Mammary epithelial cell (primary cell): ENCODE measurements at regions of chr7 and their contacts with region 1.

Region 1: DNA sequence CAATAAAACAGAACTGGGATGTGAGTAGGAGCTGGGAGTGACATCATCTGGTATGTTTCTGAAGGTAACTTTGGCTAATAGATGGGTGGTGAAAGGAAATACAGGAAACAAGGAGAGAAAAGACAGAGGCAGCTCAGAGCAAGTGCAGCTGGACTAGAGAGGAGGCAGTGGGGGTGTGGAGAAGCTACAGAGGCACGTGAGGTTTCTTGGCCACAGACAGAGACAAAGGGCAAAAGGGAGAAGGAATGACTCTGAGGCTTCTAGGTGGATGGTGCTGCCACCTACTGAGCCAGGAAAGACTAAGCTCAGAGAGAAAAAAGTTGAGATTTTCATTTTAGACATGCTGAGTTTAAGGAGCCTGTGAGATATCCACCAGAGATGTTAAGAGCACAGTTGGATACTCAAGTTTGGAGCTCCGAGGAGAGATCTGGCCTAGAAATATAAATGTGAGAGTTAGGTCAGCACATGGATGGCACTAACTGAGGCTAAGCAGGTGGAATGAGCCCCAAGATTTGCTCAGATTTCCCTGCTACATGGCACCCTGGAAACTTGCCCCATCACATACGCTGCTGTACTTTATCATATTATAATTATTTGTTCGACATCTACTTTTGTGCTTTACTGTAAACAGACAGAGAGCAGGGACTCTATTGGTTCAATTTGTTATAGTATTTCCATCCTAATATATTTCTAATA is 293.0 kb upstream of the IMMP2L start:
- DNase-seq: peak; percentile 48
- H3K4me3 ChIP-seq: no peak overlapping the region
- H3K27ac ChIP-seq: no peak overlapping the region
- H3K4me1 ChIP-seq: no peaks in the 10 kb centered on the region
- H3K27me3 ChIP-seq: no peaks in the 10 kb centered on the region
- CTCF ChIP-seq: peak; percentile 68 to 86

Region 2: GRCh38 chr7:111752022-111752582 is 103.2 kb before region 1 on chr7:
- CTCF ChIA-PET with region 1: interaction called, 5 read pairs
- dilution Hi-C with region 1: no loop called
- in situ Hi-C with region 1: no loop called
- intact Hi-C with region 1: loop called (anchors 1 kb)
- DNase-seq: peak; percentile 30
- H3K4me3 ChIP-seq: no peak overlapping the region
- H3K27ac ChIP-seq: no peak overlapping the region
- H3K4me1 ChIP-seq: peaks cover 5% of the 10 kb centered on the region
- H3K27me3 ChIP-seq: no peaks in the 10 kb centered on the region
- CTCF ChIP-seq: peak; percentile 88 to 94

Region 3: DNA sequence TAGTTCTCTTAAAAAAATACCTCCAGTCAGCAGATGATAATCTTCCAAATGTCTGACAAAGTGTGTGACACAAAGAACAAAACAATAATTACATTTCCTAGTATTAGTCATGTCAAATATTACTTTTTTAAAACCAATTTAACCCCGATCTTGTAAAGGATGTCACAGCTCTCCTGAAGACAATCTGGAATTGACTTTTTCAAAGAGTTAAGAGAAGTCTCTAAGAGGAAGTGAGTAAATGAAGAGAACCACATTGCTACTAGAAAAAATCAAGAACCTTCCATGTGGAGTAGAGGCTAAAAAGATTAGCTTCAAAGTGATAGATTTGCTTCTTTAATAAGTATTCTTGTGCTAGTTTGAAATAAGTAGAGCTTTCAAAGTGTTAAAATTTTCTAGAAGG is 74.8 kb before region 1 on chr7:
- CTCF ChIA-PET with region 1: no interaction called
- dilution Hi-C with region 1: no loop called
- in situ Hi-C with region 1: no loop called
- intact Hi-C with region 1: no loop called
- DNase-seq: no peak
- H3K4me3 ChIP-seq: no peak overlapping the region
- H3K27ac ChIP-seq: no peak overlapping the region
- H3K4me1 ChIP-seq: no peaks in the 10 kb centered on the region
- H3K27me3 ChIP-seq: no peaks in the 10 kb centered on the region
- CTCF ChIP-seq: no peak

Region 4: DNA sequence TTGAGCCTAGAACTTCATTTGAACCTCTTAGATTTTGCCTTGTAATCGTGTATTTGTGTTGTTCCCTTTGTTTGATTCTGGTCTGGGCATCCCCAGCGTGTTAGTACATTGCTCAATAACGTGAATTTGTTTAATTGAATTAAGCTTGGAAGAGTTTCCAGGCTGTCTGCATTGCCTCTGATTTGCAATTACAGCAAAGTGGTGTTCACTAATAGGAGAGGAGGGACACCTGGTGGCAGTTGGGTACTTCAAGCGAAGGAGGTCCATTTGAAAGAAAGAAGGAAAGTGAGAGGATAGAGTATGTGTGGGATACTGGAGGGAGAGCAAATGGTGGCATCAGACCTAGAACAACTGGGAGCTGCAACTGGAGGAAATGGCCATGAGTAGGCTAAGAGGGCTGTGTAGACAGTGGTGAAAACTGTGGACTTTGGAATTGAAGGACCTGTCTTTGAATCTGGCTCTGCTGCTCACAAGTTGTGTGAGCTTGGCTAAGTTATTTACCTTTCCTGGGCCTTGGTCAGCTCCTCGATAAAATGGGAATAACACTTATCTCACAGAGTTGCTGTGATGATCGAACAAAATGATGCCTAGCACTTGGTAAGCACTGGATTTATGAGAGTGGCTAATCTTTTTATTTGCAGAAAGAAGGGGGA is 640.6 kb after region 1 on chr7:
- CTCF ChIA-PET with region 1: interaction called, 6 read pairs
- dilution Hi-C with region 1: no loop called
- in situ Hi-C with region 1: no loop called
- intact Hi-C with region 1: loop called (anchors 10 kb)
- DNase-seq: peak; percentile 64
- H3K4me3 ChIP-seq: no peak overlapping the region
- H3K27ac ChIP-seq: no peak overlapping the region
- H3K4me1 ChIP-seq: peaks cover 4% of the 10 kb centered on the region
- H3K27me3 ChIP-seq: no peaks in the 10 kb centered on the region
- CTCF ChIP-seq: peak; percentile 57 to 77